HepG2 (cell line): ENCODE measurements at regions of chr15 and their contacts with region 1.

Region 1: DNA sequence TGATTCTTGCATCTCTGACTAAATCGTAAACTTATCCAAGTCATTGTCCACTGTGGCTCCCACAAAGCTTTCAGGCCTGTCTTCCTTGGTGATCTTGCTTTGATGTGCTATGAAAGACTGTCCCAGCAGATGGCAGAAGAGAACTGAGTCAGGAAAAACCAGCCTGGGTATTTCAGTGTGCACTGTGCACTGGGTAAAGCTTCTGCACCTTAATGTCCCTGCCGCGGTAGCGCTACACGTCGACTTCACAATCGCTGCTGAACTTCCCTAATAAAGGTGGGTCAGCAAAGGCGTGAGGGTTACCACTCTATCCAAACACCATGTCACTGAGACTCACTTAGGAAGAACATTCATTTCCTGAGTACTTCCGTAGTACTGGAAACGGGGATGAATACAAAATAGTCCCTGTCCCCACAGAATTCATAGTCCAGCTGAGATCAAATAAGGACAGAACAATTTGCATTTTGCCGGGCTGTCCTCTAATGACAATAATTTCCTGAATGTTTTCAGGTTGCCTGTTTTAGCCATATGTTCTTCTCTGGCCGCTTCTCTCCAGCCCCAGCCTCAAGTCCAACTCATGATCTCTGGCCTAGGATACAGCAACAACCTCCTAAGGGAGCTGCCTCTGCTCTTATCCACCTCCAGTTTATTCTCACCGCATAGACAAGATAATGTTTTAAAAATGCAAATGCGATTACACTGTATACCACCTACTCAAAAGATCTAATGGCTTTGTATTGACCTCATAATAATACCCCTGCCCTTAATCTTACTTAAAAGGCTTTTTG is 83.6 kb upstream of the AKAP13 start:
- DNase-seq: peak; percentile 75
- ATAC-seq: peak; percentile 96
- H3K4me3 ChIP-seq: peak overlapping the region; percentile 45 to 67 (median 64)
- H3K27ac ChIP-seq: no peak overlapping the region
- H3K4me1 ChIP-seq: peaks cover 24% of the 10 kb centered on the region
- H3K27me3 ChIP-seq: no peaks in the 10 kb centered on the region
- CTCF ChIP-seq: peak; percentile 86
- EP300 ChIP-seq: no peak
- POLR2A ChIP-seq: no peak
- RAD21 ChIP-seq: peak; percentile 59; the same call in 1 of the 2 replicates

Region 2: GRCh38 chr15:85154061-85154460 is 142.7 kb before region 1 on chr15:
- CTCF ChIA-PET with region 1: no interaction called
- POLR2A ChIA-PET with region 1: no interaction called
- in situ Hi-C with region 1: no loop called
- intact Hi-C with region 1: no loop called
- DNase-seq: no peak
- ATAC-seq: no peak
- H3K4me3 ChIP-seq: no peak overlapping the region
- H3K27ac ChIP-seq: no peak overlapping the region
- H3K4me1 ChIP-seq: no peaks in the 10 kb centered on the region
- H3K27me3 ChIP-seq: peaks cover 0 to 12% of the 10 kb centered on the region in 2 experiments; a peak in 2 of 5 replicates
- CTCF ChIP-seq: no peak
- EP300 ChIP-seq: no peak
- POLR2A ChIP-seq: no peak
- RAD21 ChIP-seq: no peak

Region 3: GRCh38 chr15:85330901-85331588 is 34.2 kb after region 1 on chr15:
- CTCF ChIA-PET with region 1: no interaction called
- POLR2A ChIA-PET with region 1: no interaction called
- in situ Hi-C with region 1: no loop called
- intact Hi-C with region 1: loop called (anchors 2 kb)
- DNase-seq: peak; percentile 88
- ATAC-seq: peak; percentile 92
- H3K4me3 ChIP-seq: peak overlapping the region; percentile 46 to 74 (median 65)
- H3K27ac ChIP-seq: peak overlapping the region; percentile 31
- H3K4me1 ChIP-seq: peaks cover 60% of the 10 kb centered on the region
- H3K27me3 ChIP-seq: no peaks in the 10 kb centered on the region; a peak in 2 of 5 replicates
- CTCF ChIP-seq: peak; percentile 89
- EP300 ChIP-seq: peak in 1 of 2 experiments; percentile 42; a peak in 1 of 4 replicates
- POLR2A ChIP-seq: 0 out of 4 replicates have a peak, but pooled peaks of 1 of the 2 experiments have one; percentile 33
- RAD21 ChIP-seq: peak; percentile 92

Region 4: DNA sequence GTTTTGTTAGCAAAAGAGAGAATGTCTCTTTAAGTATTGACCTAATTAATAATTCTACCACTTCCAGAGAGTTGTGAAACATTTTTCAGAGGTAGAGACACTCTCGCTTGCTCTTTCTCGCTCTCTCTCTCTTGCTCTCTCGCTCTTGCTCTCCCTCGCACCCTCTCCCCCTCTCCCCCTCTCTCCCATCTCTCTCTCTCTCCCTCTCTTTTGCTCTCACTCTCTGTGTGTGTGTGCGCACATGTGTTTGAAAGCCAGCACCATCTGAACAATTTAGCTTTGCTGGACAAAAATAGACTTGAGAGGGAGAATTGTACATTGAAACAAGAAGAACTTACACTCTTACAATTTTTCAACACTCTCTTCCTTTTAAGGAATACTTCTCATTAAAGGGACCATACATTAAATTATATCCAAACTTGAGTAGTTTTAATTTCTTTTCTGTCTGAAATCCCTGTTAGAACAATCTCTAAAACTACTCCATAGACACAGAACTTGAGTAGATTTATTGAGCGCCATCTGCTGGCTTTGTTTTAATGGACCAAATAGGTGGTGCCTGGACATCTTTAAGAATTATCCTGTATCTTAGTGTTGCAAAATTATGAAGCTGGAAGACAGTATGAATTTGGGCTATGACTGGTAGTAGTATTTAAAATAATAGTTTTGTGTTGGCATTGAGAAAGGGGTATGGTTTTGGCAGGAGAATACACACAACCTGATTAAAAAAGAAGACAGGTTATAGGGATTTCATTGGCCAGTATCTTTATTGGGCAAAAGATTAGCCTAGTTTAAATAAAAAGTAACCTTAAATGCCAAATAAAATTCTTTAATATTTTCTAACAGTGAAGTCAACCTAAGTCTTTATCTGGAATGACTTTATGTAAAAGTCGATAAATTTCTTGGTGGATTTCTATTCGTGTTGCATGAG is 208.2 kb after region 1 on chr15:
- CTCF ChIA-PET with region 1: interaction called, 14 read pairs
- POLR2A ChIA-PET with region 1: no interaction called
- in situ Hi-C with region 1: no loop called
- intact Hi-C with region 1: loop called (anchors 1 kb)
- DNase-seq: peak; percentile 53
- ATAC-seq: peak; percentile 62; the same call in 2 of the 3 replicates
- H3K4me3 ChIP-seq: no peak overlapping the region
- H3K27ac ChIP-seq: no peak overlapping the region
- H3K4me1 ChIP-seq: peaks cover 8% of the 10 kb centered on the region; the same call in 1 of the 2 replicates
- H3K27me3 ChIP-seq: no peaks in the 10 kb centered on the region; a peak in 1 of 5 replicates
- CTCF ChIP-seq: peak; percentile 55
- EP300 ChIP-seq: no peak
- POLR2A ChIP-seq: no peak
- RAD21 ChIP-seq: no peak

Region 5: GRCh38 chr15:85707519-85708338 is 410.9 kb after region 1 on chr15:
- CTCF ChIA-PET with region 1: no interaction called
- POLR2A ChIA-PET with region 1: no interaction called
- in situ Hi-C with region 1: loop called (anchors 25 kb)
- intact Hi-C with region 1: no loop called
- DNase-seq: peak; percentile 93
- ATAC-seq: peak; percentile 86
- H3K4me3 ChIP-seq: peak overlapping the region; percentile 15 to 45 (median 41); a peak in 3 of 6 replicates
- H3K27ac ChIP-seq: peak overlapping the region; percentile 83
- H3K4me1 ChIP-seq: peaks cover 33% of the 10 kb centered on the region
- H3K27me3 ChIP-seq: no peaks in the 10 kb centered on the region
- CTCF ChIP-seq: peak; percentile 11; the same call in 1 of the 2 replicates
- EP300 ChIP-seq: peak; percentile 33 to 88; a peak in 3 of 4 replicates
- POLR2A ChIP-seq: no peak
- RAD21 ChIP-seq: peak; percentile 36; the same call in 1 of the 2 replicates

Region 6: DNA sequence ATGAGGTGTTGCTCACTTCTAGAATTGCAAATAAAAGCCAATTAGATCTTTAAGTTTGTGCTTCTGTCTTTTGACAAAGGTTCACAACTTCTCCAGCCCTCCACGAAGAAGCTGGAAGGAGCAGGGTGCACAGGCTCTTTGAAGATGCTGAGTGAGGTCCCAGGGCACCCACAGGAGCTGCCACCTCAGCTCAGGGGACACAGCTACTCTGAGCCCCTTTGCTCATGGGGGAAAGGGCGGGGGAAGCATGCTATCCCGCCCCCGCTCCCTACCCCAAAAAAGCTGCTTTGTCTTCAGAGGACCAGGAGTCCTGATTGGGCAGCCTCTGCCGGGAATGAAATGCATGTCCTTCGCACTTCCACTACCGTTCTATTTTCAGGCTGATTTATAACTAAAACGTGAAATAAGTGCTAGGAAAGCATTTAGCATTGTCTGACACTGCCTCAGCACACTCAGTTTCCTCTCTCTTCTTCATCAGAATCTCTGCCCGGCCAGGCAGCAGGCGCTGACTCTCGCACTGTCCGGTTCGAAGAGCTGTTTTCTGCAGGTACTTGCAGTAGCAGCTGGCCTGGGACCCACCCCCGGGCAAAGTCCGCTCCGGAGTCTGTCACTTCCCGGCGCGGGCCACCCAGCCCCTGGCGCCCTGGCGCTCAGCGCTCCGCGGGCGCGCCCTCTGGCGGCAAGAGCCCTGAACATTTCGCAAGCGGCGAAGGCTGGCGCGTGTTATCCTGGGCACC is 543.4 kb after region 1 on chr15:
- CTCF ChIA-PET with region 1: no interaction called
- POLR2A ChIA-PET with region 1: no interaction called
- in situ Hi-C with region 1: loop called (anchors 25 kb)
- intact Hi-C with region 1: no loop called
- DNase-seq: peak; percentile 85
- ATAC-seq: peak; percentile 96
- H3K4me3 ChIP-seq: peak overlapping the region; percentile 24 to 52 (median 41)
- H3K27ac ChIP-seq: no peak overlapping the region
- H3K4me1 ChIP-seq: peaks cover 41% of the 10 kb centered on the region
- H3K27me3 ChIP-seq: peaks cover 0 to 2% of the 10 kb centered on the region in 2 experiments; a peak in 2 of 5 replicates
- CTCF ChIP-seq: peak; percentile 97
- EP300 ChIP-seq: peak in 1 of 2 experiments; percentile 60; a peak in 2 of 4 replicates
- POLR2A ChIP-seq: 0 out of 4 replicates have a peak, but pooled peaks of 1 of the 2 experiments have one; percentile 21
- RAD21 ChIP-seq: peak; percentile 97